Left ventricle myocardium superior (tissue), 1 donor: ENCODE measurements at regions of chr2 and their contacts with region 1.

Region 1: DNA sequence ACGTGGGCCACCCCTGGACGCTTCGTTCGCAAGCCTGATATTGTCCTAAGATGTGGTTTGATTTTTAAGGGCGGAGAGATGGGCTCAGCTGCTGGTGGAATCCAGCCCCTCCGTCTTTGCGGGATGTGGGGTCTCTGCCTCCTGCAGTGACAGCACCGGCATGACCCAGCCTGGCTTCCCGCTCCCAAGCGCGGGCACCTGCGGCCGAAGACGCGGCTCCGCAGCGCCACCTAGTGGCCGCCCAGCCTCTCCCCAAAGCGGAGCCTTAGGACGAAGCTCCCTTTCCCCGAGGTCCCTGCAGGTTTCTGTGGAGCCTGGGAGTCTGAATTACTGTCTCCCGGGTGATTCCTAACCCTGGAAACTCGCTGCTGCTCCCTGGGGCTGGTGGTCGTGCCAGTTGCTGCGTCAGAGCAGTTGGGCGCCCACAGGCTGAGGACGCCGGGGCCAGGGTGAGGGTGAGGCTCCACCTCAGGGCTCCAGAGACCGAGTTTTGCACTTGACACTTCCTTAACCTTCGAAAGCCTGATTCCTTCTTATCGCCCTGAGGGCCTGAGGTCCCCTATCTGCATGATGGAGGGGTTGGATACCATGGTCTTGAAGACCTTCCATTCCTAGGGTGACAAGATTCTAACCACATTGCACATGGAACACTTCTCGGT is 137.5 kb downstream of the TPO start:
- DNase-seq: peak; percentile 84
- ATAC-seq: peak; percentile 85

Region 2: DNA sequence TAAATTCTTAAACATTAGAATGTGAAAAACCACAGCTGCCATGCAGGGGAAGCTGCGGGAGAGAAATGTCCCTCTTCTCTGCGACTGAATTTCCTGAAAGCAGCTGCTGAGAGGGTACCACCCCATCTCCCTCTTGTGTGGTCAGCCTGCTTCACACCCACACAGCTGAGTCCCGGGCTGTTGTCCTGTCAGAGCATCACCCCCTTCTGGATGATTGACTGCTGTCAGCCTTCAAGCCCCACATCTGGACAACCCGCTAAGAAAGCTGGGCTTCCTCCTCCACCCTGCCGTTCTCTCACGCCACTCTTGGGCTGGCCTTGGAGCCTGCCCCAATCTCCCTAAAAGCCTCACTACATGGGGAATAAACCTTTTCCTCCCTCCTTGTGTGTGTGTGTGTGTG is 1312.9 kb before region 1 on chr2:
- intact Hi-C with region 1: loop called (anchors 10 kb)
- DNase-seq: no peak
- ATAC-seq: no peak

Region 3: GRCh38 chr2:854460-854859 is 696.3 kb before region 1 on chr2:
- intact Hi-C with region 1: loop called (anchors 10 kb)
- DNase-seq: peak; percentile 60
- ATAC-seq: no peak

Region 4: GRCh38 chr2:1321321-1321720 is 229.5 kb before region 1 on chr2:
- intact Hi-C with region 1: no loop called
- DNase-seq: no peak
- ATAC-seq: no peak

Region 5: GRCh38 chr2:1440581-1440980 is 110.2 kb before region 1 on chr2:
- intact Hi-C with region 1: no loop called
- DNase-seq: no peak
- ATAC-seq: no peak

Region 6: DNA sequence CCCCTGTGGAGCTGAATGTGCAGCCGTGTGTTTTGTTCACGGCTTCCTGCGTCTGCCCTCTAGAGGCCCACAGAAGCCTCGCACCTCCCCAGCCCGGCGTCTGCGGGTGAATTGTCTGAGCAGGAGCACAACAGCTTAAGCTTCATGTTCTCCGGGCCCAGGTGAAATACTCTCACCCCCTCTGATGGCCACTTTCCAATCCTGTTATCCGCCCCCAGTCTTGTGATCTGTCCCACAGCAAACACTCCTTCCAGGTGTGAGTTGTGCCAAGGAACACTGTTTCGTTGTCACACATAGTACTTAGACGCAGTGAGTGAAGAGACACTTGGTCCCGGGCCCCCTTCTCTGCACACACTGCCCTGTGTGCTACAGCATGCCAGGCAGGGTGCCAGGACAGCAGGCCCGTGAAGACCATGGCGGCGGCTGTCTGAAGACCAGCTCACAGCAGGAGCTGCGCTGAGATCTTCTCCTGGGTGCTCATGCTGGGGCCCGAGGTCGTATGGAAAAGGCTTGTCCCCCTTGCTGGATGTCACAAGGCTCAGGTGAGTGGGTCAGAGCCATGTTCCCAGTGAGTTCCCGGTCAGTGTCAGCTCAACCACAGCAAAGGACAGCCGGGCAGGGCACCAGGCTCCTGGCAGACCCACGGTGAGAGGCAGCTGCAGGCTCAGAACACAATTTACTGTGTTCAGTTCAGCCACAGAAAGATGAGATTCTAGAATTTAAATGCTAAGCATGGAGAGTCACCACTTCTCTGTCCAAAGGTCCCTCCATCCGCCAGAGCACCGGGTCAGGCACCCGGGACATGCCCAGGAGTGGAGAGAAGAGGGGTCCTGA is 200.4 kb after region 1 on chr2:
- intact Hi-C with region 1: no loop called
- DNase-seq: peak; percentile 80
- ATAC-seq: peak; percentile 88